ENCODE measurements at regions of chr2 and their contacts with region 1.

Region 1: DNA sequence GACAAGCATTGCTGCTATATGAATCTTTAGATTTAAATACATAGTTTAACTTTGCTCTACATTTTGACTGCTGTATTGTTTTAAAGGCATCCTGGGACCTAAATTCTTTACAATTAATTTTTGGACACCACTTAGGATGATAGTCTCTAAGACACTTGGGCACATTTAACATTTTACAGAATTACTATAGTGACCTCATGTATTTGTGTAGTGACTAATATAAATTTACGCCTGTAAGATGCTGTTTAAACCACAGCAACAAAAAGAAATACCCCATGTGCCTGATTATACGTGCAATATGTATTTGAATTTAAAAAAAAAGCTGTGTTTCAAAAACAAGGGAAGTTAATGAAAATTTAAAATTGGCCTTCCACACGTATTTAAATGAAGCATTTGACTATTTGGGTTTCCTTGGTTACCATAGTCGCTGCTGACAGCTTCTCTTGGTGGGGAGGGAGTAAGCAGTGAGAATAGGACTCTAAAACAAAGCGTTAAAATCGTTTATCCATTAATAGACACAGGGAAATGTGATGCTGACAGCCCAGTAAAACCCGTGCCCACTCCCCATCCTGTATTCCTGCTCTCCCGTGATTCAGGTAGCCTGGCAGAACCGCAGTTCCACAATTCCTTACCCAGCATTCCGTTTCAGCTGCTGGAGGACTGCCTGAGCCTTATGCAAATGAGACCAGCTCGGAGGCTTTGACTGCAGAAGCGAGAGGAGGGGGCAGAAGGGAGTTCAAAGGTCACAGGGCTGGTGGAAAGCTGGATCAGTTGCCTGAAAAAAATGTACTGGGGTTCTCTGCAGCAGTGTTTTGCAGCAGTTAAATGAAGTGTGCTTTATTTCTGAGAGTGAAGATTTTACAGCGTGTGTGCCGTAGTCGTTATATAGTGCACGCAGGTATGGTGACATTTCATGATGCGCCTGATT is 104.3 kb downstream of the CSRNP3 start:
- DNase-seq: peak; percentile 91
- H3K4me3 ChIP-seq: peak overlapping the region; percentile 47
- H3K27ac ChIP-seq: peak overlapping the region; percentile 69
- H3K4me1 ChIP-seq: peaks cover 60% of the 10 kb centered on the region
- H3K27me3 ChIP-seq: no peaks in the 10 kb centered on the region
- CTCF ChIP-seq: no peak

Region 2: DNA sequence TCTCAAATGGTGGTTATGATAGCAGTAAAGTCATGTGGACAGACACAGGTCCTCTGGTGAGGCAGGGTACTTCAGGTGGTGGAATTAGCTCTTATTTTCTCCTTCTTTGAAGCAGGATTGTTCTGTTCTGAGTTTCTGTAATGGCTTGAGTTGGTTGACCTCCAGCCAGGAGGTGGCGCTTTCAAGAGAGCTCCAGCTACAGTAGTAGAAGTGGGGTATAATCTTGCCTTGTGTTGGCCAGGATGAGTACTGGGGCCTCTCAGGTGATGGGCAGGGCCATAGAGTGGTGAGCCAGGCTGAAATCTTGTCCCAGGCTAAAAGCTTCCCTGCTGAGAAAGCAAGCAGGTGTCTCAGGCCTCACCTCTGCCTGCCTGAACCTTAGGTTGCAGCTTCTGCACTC is 156.8 kb before region 1 on chr2:
- CTCF ChIA-PET with region 1: no interaction called
- POLR2A ChIA-PET with region 1: no interaction called
- intact Hi-C with region 1: no loop called
- DNase-seq: no peak
- H3K4me3 ChIP-seq: no peak overlapping the region
- H3K27ac ChIP-seq: no peak overlapping the region
- H3K4me1 ChIP-seq: peaks cover 4% of the 10 kb centered on the region
- H3K27me3 ChIP-seq: no peaks in the 10 kb centered on the region
- CTCF ChIP-seq: no peak

Region 3: GRCh38 chr2:165450156-165450555 is 123.6 kb before region 1 on chr2:
- CTCF ChIA-PET with region 1: no interaction called
- POLR2A ChIA-PET with region 1: no interaction called
- intact Hi-C with region 1: loop called (anchors 5 kb)
- DNase-seq: peak; percentile 80
- H3K4me3 ChIP-seq: no peak overlapping the region
- H3K27ac ChIP-seq: peak overlapping the region; percentile 87
- H3K4me1 ChIP-seq: peaks cover 47% of the 10 kb centered on the region
- H3K27me3 ChIP-seq: no peaks in the 10 kb centered on the region
- CTCF ChIP-seq: peak; percentile 40; the same call in 1 of the 2 replicates

Region 4: DNA sequence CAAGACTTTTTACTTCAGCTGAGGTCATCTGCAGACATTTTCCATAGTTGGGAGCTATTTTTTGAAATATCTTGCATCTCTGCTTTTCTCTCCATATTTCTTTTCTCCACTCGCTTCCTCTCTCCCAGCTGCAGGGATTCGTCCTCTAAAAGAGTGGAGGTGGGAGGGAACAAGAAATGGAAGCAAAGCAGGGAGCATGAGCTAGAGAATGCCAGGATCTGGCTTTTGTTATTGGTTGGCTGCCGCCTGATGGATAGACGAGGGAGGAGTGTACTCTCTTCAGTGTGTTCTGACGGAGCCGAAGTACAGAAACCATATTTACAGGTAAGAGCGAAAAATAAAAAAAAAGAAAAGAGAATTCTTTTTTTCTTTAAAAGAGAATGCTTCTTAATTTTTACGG is 104.4 kb before region 1 on chr2 and contains the start of gene CSRNP3:
- CTCF ChIA-PET with region 1: no interaction called
- POLR2A ChIA-PET with region 1: no interaction called
- intact Hi-C with region 1: loop called (anchors 2 kb)
- DNase-seq: peak; percentile 96
- H3K4me3 ChIP-seq: peak within 1 kb of the TSS; percentile 59
- H3K27ac ChIP-seq: peak within 1 kb of the TSS; percentile 51
- H3K4me1 ChIP-seq: peaks cover 42% of the 10 kb centered on the region
- H3K27me3 ChIP-seq: no peaks in the 10 kb centered on the region
- CTCF ChIP-seq: no peak; the same call in 1 of the 2 replicates
- total RNA-seq, gene CSRNP3: 39.5 and 47.7 TPM in 2 replicates

Region 5: GRCh38 chr2:165634855-165635254 is 61.1 kb after region 1 on chr2:
- CTCF ChIA-PET with region 1: no interaction called
- POLR2A ChIA-PET with region 1: interaction called, 4 read pairs
- intact Hi-C with region 1: loop called (anchors 5 kb)
- DNase-seq: peak; percentile 99
- H3K4me3 ChIP-seq: peak overlapping the region; percentile 15
- H3K27ac ChIP-seq: peak overlapping the region; percentile 75
- H3K4me1 ChIP-seq: peaks cover 87% of the 10 kb centered on the region
- H3K27me3 ChIP-seq: no peaks in the 10 kb centered on the region
- CTCF ChIP-seq: no peak

Region 6: DNA sequence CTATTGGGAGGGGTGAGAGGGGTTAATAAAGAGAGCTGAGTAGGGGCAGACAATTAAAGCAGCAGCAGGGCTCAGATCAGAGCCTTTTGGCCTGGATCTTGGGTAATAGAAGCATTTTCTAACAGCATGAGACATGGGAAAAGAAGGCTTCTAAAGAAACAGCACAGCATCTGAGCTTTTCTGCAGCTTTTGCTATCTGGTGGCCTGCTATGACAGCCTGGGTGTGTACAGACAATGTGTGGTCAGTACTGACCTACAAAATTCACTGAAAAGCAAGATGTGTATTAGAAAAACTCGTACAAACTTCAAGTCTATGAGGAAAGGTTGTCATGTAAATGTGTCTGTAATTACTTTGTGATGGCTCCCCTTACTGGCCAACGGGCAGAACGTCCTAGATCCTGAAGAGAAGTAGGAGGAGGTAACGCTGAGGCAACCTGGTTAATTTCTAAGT is 124.7 kb after region 1 on chr2:
- CTCF ChIA-PET with region 1: no interaction called
- POLR2A ChIA-PET with region 1: no interaction called
- intact Hi-C with region 1: loop called (anchors 5 kb)
- DNase-seq: peak; percentile 85
- H3K4me3 ChIP-seq: no peak overlapping the region
- H3K27ac ChIP-seq: peak overlapping the region; percentile 6
- H3K4me1 ChIP-seq: peaks cover 23% of the 10 kb centered on the region
- H3K27me3 ChIP-seq: no peaks in the 10 kb centered on the region
- CTCF ChIP-seq: peak; percentile 71

Measured in A673 (cell line).